G401 (cell line): ENCODE measurements at regions of chr3 and their contacts with region 1.

Region 1: GRCh38 chr3:128577711-128578110 is 72.9 kb downstream of the RPN1 start:
- DNase-seq: no peak

Region 2: GRCh38 chr3:128537121-128537703 is 40.5 kb before region 1 on chr3:
- in situ Hi-C with region 1: loop called (anchors 5 kb)
- DNase-seq: no peak